Dendritic cell treated with granulocyte-macrophage colony-stimulating factor and Interleukin-4, amounts not matched to agents 40 ng/mL and 50 ng/mL, for 4 days (primary cell): ENCODE measurements at regions of chr2 and their contacts with region 1.

Region 1: GRCh38 chr2:178796079-178796677 is 11.0 kb downstream of the TTN start:
- H3K4me3 Mint-ChIP-seq: no peak overlapping the region
- H3K27ac Mint-ChIP-seq: no peak overlapping the region
- H3K4me1 Mint-ChIP-seq: no peaks in the 10 kb centered on the region
- H3K27me3 Mint-ChIP-seq: no peaks in the 10 kb centered on the region

Region 2: DNA sequence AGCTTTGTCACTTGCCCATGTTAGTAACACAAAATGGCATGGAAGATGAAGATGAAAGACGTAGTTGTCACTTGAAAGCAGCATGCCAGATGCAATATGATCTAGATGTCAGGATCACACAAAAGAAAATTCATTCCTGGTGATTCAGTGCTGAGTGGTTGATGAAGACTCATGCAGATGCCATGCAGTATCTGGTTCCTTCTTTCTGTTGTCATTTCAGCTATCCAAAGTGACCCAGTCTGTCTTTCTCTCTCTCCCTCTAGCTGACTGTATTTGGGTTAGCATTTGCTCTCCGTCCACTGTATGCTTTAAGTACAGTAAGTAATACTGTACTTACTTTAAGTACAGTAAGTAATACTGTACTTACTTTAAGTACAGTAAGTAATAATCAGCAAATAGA is 39.3 kb before region 1 on chr2:
- intact Hi-C with region 1: no loop called
- H3K4me3 Mint-ChIP-seq: no peak overlapping the region
- H3K27ac Mint-ChIP-seq: no peak overlapping the region
- H3K4me1 Mint-ChIP-seq: no peaks in the 10 kb centered on the region
- H3K27me3 Mint-ChIP-seq: no peaks in the 10 kb centered on the region

Region 3: DNA sequence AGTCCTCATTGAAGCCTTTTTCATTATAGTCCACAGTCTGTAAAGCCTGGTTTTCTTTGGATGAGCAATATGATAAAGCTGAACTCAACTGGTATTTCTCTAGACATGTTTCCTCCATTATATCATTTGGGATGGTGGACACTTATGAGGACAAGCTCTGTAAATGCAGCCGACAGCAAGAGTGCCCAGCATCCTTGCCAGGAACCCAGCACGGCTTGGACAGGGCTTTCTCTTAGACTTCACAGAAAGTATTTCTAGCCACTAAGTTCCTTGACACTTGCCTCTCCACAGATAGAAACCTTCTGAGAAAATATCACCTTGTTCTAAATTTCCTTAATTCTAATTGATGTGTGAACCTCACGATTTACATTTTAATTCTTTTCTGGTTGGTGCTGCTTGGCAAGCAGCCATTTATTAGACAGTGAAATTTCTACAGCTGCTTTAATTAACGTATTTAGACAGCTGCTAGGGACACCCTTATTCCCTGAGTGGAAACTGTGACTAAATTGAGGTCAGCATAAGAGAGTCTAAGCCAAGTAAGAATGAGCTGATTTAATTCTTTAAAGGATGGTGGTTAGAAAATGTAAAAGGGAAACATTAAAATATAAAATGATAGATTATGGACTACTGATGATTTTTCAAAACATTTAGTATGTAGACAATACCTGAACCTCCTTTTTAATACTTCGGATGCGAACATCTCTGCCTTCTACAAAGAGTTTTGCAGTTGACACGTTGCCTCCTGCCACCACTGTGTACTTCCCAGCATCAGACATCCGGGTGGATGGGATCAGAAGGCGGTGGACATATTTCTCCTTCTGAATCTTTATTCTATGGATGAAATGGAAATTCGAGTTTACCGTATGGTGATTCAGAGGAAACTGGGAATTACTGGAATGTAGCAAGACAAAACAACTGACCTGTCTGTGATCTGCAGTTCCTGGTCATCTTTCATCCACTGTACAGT is 28.8 kb before region 1 on chr2:
- intact Hi-C with region 1: no loop called
- H3K4me3 Mint-ChIP-seq: no peak overlapping the region
- H3K27ac Mint-ChIP-seq: no peak overlapping the region
- H3K4me1 Mint-ChIP-seq: no peaks in the 10 kb centered on the region
- H3K27me3 Mint-ChIP-seq: no peaks in the 10 kb centered on the region

Region 4: GRCh38 chr2:178863856-178864620 is 67.9 kb after region 1 on chr2:
- intact Hi-C with region 1: no loop called
- H3K4me3 Mint-ChIP-seq: no peak overlapping the region
- H3K27ac Mint-ChIP-seq: no peak overlapping the region
- H3K4me1 Mint-ChIP-seq: no peaks in the 10 kb centered on the region
- H3K27me3 Mint-ChIP-seq: no peaks in the 10 kb centered on the region

Region 5: DNA sequence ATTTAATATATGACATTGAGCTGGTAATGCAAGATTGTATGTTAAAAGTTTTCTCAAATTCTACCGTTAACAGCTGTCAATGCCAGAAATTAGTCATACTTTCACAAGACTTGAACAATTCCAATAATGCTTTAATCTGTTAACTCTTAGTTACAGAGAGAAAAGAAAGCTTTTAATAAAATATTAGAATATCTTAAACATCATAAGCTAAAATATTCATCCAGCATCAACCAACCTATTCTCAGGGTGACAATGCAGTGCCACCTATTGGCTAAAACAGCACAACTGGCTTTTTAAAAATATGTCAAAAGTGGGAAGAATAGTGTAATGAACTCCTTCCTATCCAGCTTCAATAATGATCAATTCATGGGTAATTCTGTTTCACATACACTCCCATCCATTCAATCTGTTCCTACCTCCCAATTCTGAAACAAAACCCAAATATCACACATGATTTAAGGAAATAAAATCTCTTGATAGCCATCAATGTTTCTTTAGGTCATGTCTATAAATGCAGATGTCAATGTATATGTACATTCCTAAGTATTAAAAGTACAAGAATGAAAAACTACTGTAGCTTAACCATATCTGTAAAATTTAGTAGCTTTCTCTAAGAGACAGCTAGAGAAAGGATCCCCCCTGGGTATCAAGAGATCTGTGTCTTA is 333.5 kb after region 1 on chr2:
- intact Hi-C with region 1: loop called (anchors 5 kb)
- H3K4me3 Mint-ChIP-seq: no peak overlapping the region
- H3K27ac Mint-ChIP-seq: no peak overlapping the region
- H3K4me1 Mint-ChIP-seq: no peaks in the 10 kb centered on the region
- H3K27me3 Mint-ChIP-seq: no peaks in the 10 kb centered on the region

Region 6: GRCh38 chr2:179440642-179441251 is 644.6 kb after region 1 on chr2:
- intact Hi-C with region 1: loop called (anchors 5 kb)
- H3K4me3 Mint-ChIP-seq: no peak overlapping the region
- H3K27ac Mint-ChIP-seq: no peak overlapping the region
- H3K4me1 Mint-ChIP-seq: peaks cover 6% of the 10 kb centered on the region
- H3K27me3 Mint-ChIP-seq: no peaks in the 10 kb centered on the region

Region 7: GRCh38 chr2:179751163-179751809 is 955.1 kb after region 1 on chr2:
- intact Hi-C with region 1: loop called (anchors 2 kb)
- H3K4me3 Mint-ChIP-seq: no peak overlapping the region
- H3K27ac Mint-ChIP-seq: no peak overlapping the region
- H3K4me1 Mint-ChIP-seq: no peaks in the 10 kb centered on the region
- H3K27me3 Mint-ChIP-seq: no peaks in the 10 kb centered on the region